ENCODE measurements at regions of chr10 and their contacts with region 1.

Region 1: GRCh38 chr10:93482145-93482834 is at the start of gene MYOF:
- DNase-seq: peak; percentile 76
- H3K4me3 Mint-ChIP-seq: peak within 1 kb of the TSS; percentile 84
- H3K27ac Mint-ChIP-seq: peak within 1 kb of the TSS; percentile 81
- H3K4me1 Mint-ChIP-seq: peaks cover 20% of the 10 kb centered on the region
- H3K27me3 Mint-ChIP-seq: peaks cover 3% of the 10 kb centered on the region
- total RNA-seq, gene MYOF: 10.4 to 10.5 TPM

Region 2: DNA sequence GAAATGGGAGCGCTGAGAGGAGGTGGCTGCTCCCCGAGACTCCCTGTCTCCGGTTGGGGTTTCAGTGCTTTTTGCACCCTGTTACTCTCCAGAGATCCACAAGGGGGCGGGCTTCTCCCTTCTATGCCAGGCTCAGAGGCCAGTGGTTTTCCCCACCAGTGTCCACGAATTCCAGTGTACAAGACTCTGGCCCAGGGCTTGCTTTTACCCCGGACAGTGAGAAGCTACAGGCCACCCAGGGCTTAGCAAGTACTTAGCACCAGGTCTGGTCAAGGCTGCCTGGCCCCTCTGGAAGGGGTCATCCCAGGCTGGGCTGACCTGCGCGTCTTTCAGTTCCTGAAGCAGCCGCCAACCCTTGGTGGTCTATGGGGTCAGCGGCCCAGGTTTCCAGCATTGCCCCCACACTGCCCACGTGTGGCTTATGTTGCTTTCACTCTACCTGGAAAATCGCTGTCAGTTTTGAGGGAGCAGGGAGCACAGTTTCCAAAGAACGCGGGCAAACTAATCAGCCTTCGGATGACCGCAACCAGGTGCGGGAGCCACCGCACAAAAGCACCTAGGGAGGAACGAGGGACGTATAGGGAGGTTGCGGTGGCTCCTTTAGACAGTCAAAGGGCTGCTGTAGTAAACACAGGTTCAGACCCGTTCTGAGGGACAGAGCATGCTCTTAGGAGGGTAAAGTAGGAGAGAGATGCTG is 401.8 kb before region 1 on chr10:
- CTCF ChIA-PET with region 1: interaction called, 3 read pairs
- intact Hi-C with region 1: loop called (anchors 1 kb)
- DNase-seq: peak; percentile 70
- H3K4me3 Mint-ChIP-seq: no peak overlapping the region
- H3K27ac Mint-ChIP-seq: no peak overlapping the region
- H3K4me1 Mint-ChIP-seq: peaks cover 6% of the 10 kb centered on the region
- H3K27me3 Mint-ChIP-seq: peaks cover 38% of the 10 kb centered on the region

Region 3: GRCh38 chr10:93368210-93368609 is 114.1 kb before region 1 on chr10:
- CTCF ChIA-PET with region 1: interaction called, 331 read pairs
- intact Hi-C with region 1: no loop called
- DNase-seq: no peak
- H3K4me3 Mint-ChIP-seq: no peak overlapping the region
- H3K27ac Mint-ChIP-seq: no peak overlapping the region
- H3K4me1 Mint-ChIP-seq: peaks cover 3% of the 10 kb centered on the region
- H3K27me3 Mint-ChIP-seq: no peaks in the 10 kb centered on the region

Region 4: DNA sequence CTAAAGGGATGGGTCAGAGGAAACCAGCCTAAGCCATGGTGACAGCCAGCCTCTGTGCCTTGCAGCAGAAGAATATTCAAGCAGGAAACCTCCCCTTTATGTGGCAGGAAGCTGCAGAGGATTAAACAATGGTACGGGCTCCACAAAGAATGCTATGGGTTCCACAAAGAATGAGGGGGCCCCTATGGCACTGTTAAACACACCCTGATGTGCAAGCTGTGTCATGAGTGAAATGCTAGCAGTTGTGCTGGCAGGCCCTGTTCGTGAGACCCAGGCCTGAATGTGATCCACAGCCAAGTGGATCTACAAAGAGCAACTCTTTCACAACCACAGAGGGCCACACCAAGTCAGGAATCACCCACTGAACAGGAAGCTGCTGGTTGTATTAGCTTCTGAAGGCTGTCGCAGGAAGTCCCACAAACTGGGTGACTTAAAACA is 69.0 kb before region 1 on chr10:
- CTCF ChIA-PET with region 1: interaction called, 11 read pairs
- intact Hi-C with region 1: loop called (anchors 1 kb)
- DNase-seq: peak; percentile 64
- H3K4me3 Mint-ChIP-seq: no peak overlapping the region
- H3K27ac Mint-ChIP-seq: peak overlapping the region; percentile 59
- H3K4me1 Mint-ChIP-seq: peaks cover 59% of the 10 kb centered on the region
- H3K27me3 Mint-ChIP-seq: no peaks in the 10 kb centered on the region

Region 5: GRCh38 chr10:93515071-93516005 is 33.0 kb after region 1 on chr10:
- CTCF ChIA-PET with region 1: interaction called, 30 read pairs
- intact Hi-C with region 1: loop called (anchors 1 kb)
- DNase-seq: no peak
- H3K4me3 Mint-ChIP-seq: no peak overlapping the region
- H3K27ac Mint-ChIP-seq: no peak overlapping the region
- H3K4me1 Mint-ChIP-seq: no peaks in the 10 kb centered on the region
- H3K27me3 Mint-ChIP-seq: peaks cover 2% of the 10 kb centered on the region

Region 6: GRCh38 chr10:94123258-94123995 is 641.1 kb after region 1 on chr10:
- CTCF ChIA-PET with region 1: no interaction called
- intact Hi-C with region 1: no loop called
- DNase-seq: no peak
- H3K4me3 Mint-ChIP-seq: no peak overlapping the region
- H3K27ac Mint-ChIP-seq: no peak overlapping the region
- H3K4me1 Mint-ChIP-seq: no peaks in the 10 kb centered on the region
- H3K27me3 Mint-ChIP-seq: no peaks in the 10 kb centered on the region